ENCODE measurements at regions of chr7 and their contacts with region 1.

Region 1: GRCh38 chr7:47818796-47819606 is 129.3 kb downstream of the PKD1L1 start:
- DNase-seq: peak; percentile 74 to 93 (median 79)
- H3K4me3 ChIP-seq: no peak overlapping the region
- H3K27ac ChIP-seq: no peak overlapping the region
- H3K4me1 ChIP-seq: peaks cover 0 to 17% of the 10 kb centered on the region in 2 donors
- H3K27me3 ChIP-seq: no peaks in the 10 kb centered on the region
- CTCF ChIP-seq: peak; percentile 85 to 97 (median 96)
- POLR2A ChIP-seq: no peak

Region 2: GRCh38 chr7:47266131-47266706 is 552.8 kb before region 1 on chr7:
- intact Hi-C with region 1: loop called (anchors 10 kb)
- DNase-seq: peak; percentile 52 to 86 (median 56)
- H3K4me3 ChIP-seq: no peak overlapping the region
- H3K27ac ChIP-seq: peak overlapping the region in 1 of 5 donors; percentile 2
- H3K4me1 ChIP-seq: peaks cover 0 to 8% of the 10 kb centered on the region in 2 donors
- H3K27me3 ChIP-seq: no peaks in the 10 kb centered on the region
- CTCF ChIP-seq: peak; percentile 89 to 94 (median 94)
- POLR2A ChIP-seq: no peak

Region 3: GRCh38 chr7:47435889-47436312 is 383.1 kb before region 1 on chr7:
- intact Hi-C with region 1: loop called in 1 of 2 experiments (anchors 5 kb)
- DNase-seq: peak; percentile 74 to 94 (median 86)
- H3K4me3 ChIP-seq: no peak overlapping the region
- H3K27ac ChIP-seq: peak overlapping the region in 1 of 5 donors; percentile 2
- H3K4me1 ChIP-seq: peaks cover 0 to 9% of the 10 kb centered on the region in 2 donors
- H3K27me3 ChIP-seq: no peaks in the 10 kb centered on the region
- CTCF ChIP-seq: peak; percentile 72 to 90 (median 84)
- POLR2A ChIP-seq: no peak

Region 4: DNA sequence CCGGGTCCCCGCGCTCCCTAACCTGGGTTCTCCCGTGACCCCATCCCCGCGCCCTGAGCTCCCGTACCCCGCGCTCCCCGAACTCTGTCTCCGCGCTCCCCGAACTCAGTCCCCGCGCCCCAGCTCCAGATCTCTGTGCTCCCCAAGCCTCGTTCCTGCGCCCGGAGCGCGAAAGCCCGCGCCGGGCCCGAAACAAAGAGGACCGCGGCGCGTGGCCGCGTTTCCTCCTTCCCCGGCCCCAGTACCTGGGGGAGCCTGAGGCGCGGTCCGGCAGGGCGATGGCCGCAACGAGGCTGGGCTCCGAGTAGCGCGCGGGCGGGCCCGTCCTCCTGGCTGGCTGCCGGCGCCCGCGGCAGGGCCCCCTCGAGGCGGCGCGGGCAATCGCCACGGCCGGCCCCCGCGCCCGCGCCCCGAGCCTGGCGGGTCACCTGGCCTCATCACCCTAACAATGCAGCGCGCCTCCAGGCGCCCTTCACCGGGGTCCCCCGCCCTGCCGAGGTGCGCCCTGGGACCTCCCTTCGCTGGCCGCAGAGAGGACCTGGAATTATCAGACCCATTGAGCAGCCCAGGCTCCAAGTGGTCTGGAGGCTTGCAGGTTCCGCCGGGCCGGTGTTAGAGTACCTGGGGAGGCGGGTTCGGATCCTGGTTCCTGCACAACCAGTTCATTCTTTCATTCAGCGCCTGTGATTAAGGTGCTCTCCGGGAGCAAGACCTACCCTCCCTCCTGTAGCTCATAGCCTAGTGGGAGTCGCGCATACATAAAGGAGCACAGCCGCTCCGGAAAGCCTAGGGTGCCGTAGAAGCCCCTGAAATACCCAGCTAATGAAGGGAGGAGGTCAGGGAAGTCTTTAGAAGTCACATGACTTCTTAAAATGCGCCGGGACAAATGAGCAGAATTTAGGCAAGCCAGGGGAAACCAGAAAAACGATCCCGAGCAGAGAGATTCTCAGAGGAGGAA is 236.9 kb before region 1 on chr7 and contains the start of gene TNS3:
- intact Hi-C with region 1: loop called (anchors 5 to 10 kb)
- DNase-seq: peak in 6 of 7 donors; percentile 44 to 61 (median 52)
- H3K4me3 ChIP-seq: peak within 1 kb of the TSS; percentile 68 to 91 (median 82)
- H3K27ac ChIP-seq: peak within 1 kb of the TSS in 4 of 5 donors; percentile 78 to 91 (median 80)
- H3K4me1 ChIP-seq: peaks cover 35 to 53% of the 10 kb centered on the region in 2 donors
- H3K27me3 ChIP-seq: no peaks in the 10 kb centered on the region
- CTCF ChIP-seq: peak in 3 of 6 experiments; percentile 27 to 58 (median 34)
- POLR2A ChIP-seq: peak in 1 of 2 donors; percentile 57
- total RNA-seq, gene TNS3: 44.9 to 188 (median 125) TPM

Measured in adrenal gland (tissue), 19 donors.